Mammary epithelial cell (primary cell): ENCODE measurements at regions of chr1 and their contacts with region 1.

Region 1: GRCh38 chr1:29698033-29698432 is 461.7 kb downstream of the PTPRU start:
- DNase-seq: peak; percentile 51
- H3K4me3 ChIP-seq: no peak overlapping the region
- H3K27ac ChIP-seq: no peak overlapping the region
- H3K4me1 ChIP-seq: no peaks in the 10 kb centered on the region
- H3K27me3 ChIP-seq: no peaks in the 10 kb centered on the region
- CTCF ChIP-seq: peak; percentile 63 to 67

Region 2: GRCh38 chr1:29649189-29650040 is 48.6 kb before region 1 on chr1:
- CTCF ChIA-PET with region 1: no interaction called
- dilution Hi-C with region 1: loop called (anchors 5 kb)
- in situ Hi-C with region 1: no loop called
- intact Hi-C with region 1: no loop called
- DNase-seq: peak; percentile 71
- H3K4me3 ChIP-seq: no peak overlapping the region
- H3K27ac ChIP-seq: peak overlapping the region; percentile 11
- H3K4me1 ChIP-seq: peaks cover 30% of the 10 kb centered on the region
- H3K27me3 ChIP-seq: no peaks in the 10 kb centered on the region
- CTCF ChIP-seq: no peak